ENCODE measurements at regions of chr2 and their contacts with region 1.

Region 1: DNA sequence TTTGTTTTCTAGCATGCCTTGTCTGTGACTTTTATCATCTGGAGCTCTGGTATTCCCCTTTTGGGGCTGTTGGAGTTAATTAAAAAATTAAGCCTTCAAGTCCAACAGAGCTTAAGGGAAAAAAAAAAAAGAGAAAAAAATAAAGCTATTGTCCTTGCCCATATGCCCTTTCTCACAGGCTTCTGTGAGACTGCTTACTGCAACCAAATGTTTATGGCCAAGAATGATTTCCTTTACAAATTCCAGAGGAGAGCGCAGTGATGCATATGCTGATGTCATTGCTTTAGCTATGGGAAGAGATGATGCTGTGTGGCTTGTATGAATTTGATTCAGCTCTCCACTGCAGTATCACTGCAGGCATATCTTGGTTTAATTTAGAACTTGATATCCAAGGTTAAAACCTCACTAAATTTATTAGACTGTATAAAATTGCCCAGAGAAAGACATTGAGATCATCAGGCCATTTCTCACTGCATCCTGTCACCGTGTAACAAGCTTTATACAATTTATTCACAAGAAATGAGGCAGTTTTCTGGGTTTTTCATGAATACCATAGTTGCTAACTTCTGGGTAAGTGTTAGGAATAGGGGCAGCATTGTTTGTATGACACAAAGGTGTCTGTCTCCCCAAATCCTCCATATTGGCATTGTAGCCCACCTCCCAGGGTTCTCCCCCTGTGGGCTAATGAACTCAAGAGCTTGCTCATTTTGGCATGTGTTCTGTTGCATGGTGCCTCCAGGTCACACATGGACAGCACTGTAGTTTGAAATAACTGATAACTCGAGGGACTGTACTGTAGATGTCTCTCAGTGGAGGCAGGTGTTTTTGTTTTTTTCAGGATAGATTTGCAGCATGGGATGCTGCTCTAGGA is 85.0 kb downstream of the TANC1 start:
- DNase-seq: peak; percentile 96
- H3K4me3 ChIP-seq: no peak overlapping the region
- H3K27ac ChIP-seq: peak overlapping the region; percentile 49
- H3K4me1 ChIP-seq: peaks cover 16% of the 10 kb centered on the region
- H3K27me3 ChIP-seq: no peaks in the 10 kb centered on the region
- CTCF ChIP-seq: no peak
- POLR2A ChIP-seq: no peak

Region 2: GRCh38 chr2:158079672-158080071 is 973.7 kb before region 1 on chr2:
- CTCF ChIA-PET with region 1: no interaction called
- POLR2A ChIA-PET with region 1: no interaction called
- dilution Hi-C with region 1: no loop called
- intact Hi-C with region 1: no loop called
- DNase-seq: peak; percentile 2
- H3K4me3 ChIP-seq: no peak overlapping the region
- H3K27ac ChIP-seq: no peak overlapping the region
- H3K4me1 ChIP-seq: no peaks in the 10 kb centered on the region
- H3K27me3 ChIP-seq: no peaks in the 10 kb centered on the region
- CTCF ChIP-seq: no peak
- POLR2A ChIP-seq: no peak

Region 3: DNA sequence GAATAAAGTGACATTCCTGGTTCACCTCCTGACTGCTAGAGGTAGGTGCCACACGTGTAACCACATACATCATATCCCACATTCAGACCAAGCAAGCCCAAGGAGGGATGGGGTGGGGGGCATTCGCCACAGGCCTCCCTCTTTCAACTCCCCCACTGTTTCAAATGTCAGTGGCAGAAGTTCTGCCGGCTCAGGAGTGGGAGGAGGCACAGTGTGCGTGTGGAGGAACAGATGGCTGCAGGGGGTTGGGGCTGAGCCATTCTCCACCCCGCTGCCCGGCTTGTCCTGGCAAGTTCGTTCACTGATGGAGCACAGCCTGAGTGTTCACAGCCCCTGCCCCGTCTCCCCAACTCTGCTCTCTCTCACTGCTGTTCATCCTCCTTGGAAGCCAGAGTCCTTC is 160.4 kb before region 1 on chr2:
- CTCF ChIA-PET with region 1: no interaction called
- POLR2A ChIA-PET with region 1: no interaction called
- dilution Hi-C with region 1: no loop called
- intact Hi-C with region 1: no loop called
- DNase-seq: no peak
- H3K4me3 ChIP-seq: no peak overlapping the region
- H3K27ac ChIP-seq: no peak overlapping the region
- H3K4me1 ChIP-seq: no peaks in the 10 kb centered on the region
- H3K27me3 ChIP-seq: no peaks in the 10 kb centered on the region
- CTCF ChIP-seq: no peak
- POLR2A ChIP-seq: no peak

Region 4: DNA sequence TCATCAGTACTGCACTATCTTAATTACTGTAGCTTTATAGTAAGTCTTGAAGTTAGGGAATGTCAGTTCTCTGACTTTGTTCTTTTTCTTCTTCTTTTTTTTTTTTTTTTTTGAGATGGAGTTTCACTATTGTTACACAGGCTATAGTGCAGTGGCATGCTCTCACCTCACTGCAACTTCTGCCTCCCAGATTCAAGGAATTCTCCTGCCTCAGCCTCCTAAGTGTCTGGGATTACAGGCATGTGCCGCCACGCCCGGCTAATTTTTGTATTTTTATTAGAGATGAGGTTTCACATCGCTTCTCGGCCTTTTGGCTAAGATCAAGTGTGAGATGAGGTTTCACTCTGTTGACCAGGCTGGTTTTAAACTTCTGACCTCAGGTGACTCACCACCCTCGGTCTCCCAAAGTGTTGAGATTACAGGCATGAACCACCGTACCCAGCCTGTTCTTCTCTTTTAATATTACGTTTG is 126.9 kb before region 1 on chr2:
- CTCF ChIA-PET with region 1: no interaction called
- POLR2A ChIA-PET with region 1: no interaction called
- dilution Hi-C with region 1: no loop called
- intact Hi-C with region 1: no loop called
- DNase-seq: peak; percentile 59
- H3K4me3 ChIP-seq: no peak overlapping the region
- H3K27ac ChIP-seq: peak overlapping the region; percentile 29
- H3K4me1 ChIP-seq: peaks cover 15% of the 10 kb centered on the region
- H3K27me3 ChIP-seq: no peaks in the 10 kb centered on the region
- CTCF ChIP-seq: no peak
- POLR2A ChIP-seq: no peak

Region 5: GRCh38 chr2:159064446-159065301 is 11.3 kb after region 1 on chr2:
- CTCF ChIA-PET with region 1: interaction called, 23 read pairs
- POLR2A ChIA-PET with region 1: interaction called, 3 read pairs
- dilution Hi-C with region 1: no loop called
- intact Hi-C with region 1: loop called (anchors 1 kb)
- DNase-seq: peak; percentile 94
- H3K4me3 ChIP-seq: no peak overlapping the region
- H3K27ac ChIP-seq: peak overlapping the region; percentile 54
- H3K4me1 ChIP-seq: peaks cover 42% of the 10 kb centered on the region
- H3K27me3 ChIP-seq: no peaks in the 10 kb centered on the region
- CTCF ChIP-seq: no peak
- POLR2A ChIP-seq: peak; percentile 26

Region 6: DNA sequence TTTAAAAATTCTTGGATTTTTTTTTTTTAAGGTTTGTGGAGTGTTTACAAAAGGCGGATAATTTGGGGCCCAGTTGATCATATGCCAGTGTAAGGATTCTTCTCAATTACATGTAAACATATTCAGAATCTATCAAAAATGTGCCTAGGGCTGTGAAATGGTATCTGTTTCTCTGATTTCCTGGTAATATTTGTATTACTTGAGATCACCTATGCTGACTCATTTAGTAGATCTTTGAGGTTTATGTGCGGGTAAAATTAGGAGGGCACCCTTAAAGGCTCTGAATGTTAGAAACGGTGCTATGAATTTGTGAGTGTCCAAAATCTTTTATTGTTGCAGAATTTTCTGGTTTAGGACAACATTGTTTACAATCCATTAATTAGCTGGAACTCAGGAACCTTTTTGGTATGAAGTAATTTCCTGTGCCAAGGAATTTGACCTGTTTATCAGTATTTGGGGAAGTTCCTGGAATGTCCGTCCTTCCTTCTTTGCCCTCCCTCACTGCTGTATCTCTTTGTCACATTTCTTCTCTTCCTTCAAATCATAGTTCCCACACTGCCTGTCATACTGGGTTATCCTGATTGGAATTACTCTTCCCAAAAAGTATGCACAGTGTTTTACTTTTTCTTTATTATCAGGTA is 45.5 kb after region 1 on chr2:
- CTCF ChIA-PET with region 1: no interaction called
- POLR2A ChIA-PET with region 1: no interaction called
- dilution Hi-C with region 1: no loop called
- intact Hi-C with region 1: loop called (anchors 2 kb)
- DNase-seq: peak; percentile 81
- H3K4me3 ChIP-seq: peak overlapping the region in 1 of 3 experiments; percentile 44
- H3K27ac ChIP-seq: peak overlapping the region; percentile 92
- H3K4me1 ChIP-seq: peaks cover 55% of the 10 kb centered on the region
- H3K27me3 ChIP-seq: no peaks in the 10 kb centered on the region
- CTCF ChIP-seq: no peak
- POLR2A ChIP-seq: peak; percentile 64